Endothelial cell of umbilical vein (primary cell): ENCODE measurements at regions of chr16 and their contacts with region 1.

Region 1: DNA sequence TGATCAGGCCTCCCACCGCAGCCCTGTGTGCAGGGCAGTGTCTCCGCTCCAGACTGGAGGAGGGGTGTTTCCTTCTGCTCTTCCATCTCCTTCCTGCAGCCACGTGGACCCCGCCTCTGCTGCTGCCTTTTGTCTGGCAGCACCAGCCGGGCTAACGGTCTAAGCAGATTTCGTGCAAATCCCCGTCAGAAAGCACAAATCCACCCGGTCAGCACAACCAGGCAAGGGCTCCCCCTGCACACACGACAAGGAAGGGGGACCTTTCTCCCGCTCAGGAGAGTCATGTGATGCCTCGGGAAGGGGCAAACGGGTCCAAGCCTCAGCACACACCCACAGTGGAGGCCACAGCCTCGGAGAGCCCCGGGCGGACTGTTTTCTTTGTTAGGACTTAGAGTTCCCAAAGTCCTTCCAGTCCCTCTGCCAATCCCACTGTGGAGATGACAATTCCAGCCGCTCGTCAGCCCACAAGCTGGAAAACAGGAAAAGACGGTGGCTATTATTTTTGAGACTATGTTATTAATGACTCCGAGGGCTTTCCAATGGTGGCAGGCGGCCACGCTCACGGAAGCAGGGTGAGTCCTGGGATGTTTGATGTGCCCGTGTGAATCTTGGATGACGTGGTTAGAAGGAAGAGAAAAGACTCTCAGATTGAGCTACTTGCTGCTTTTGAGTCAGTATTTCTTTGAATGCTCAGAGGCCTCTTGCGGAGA is 22.5 kb upstream of the MEAK7 start:
- DNase-seq: peak; percentile 76
- H3K4me3 ChIP-seq: no peak overlapping the region
- H3K27ac ChIP-seq: peak overlapping the region; percentile 68
- H3K4me1 ChIP-seq: peaks cover 23% of the 10 kb centered on the region
- H3K27me3 ChIP-seq: no peaks in the 10 kb centered on the region
- CTCF ChIP-seq: no peak
- POLR2A ChIP-seq: peak; percentile 54

Region 2: DNA sequence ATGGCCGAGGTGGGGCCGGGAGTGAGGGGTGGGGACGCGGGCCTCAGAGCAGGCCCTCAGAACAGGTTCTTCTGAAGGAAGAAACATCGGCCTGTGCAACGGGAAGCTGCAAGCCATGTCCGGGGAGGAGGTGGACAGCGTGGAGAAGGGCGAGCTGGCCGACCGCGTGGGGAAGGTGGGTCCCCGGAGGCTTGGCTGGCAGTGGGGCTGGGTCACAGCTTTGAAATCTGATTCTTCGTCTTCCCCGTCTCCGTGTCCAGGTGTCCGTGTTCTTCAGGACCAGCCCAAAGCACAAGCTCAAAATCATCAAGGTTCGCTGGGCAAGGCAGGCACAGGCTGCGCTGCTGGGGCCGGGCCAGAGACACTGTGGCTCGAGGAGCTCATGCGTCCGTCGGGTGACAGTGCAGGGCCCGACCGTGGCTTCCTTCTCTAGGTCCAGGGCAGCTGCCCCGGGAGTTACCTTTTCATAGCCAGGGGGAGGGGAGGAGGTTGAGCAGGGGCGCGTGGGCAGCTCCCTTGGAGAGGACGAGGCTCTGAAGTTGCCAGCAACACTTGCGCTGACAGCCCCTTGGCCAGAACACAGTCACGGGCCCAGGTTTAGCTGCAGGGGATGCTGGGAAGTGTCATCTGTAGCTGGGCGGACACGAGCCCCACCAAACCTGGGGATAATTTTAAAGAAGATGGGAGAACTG is 73.7 kb before region 1 on chr16:
- CTCF ChIA-PET with region 1: no interaction called
- POLR2A ChIA-PET with region 1: no interaction called
- dilution Hi-C with region 1: no loop called
- intact Hi-C with region 1: no loop called
- DNase-seq: no peak
- H3K4me3 ChIP-seq: no peak overlapping the region
- H3K27ac ChIP-seq: no peak overlapping the region
- H3K4me1 ChIP-seq: no peaks in the 10 kb centered on the region
- H3K27me3 ChIP-seq: no peaks in the 10 kb centered on the region
- CTCF ChIP-seq: no peak
- POLR2A ChIP-seq: no peak

Region 3: GRCh38 chr16:84504420-84505248 is 22.3 kb before region 1 on chr16 and contains the start of gene MEAK7:
- CTCF ChIA-PET with region 1: interaction called, 73 read pairs
- POLR2A ChIA-PET with region 1: no interaction called
- dilution Hi-C with region 1: no loop called
- intact Hi-C with region 1: no loop called
- DNase-seq: peak; percentile 98
- H3K4me3 ChIP-seq: peak within 1 kb of the TSS; percentile 61 to 81 (median 62)
- H3K27ac ChIP-seq: peak within 1 kb of the TSS; percentile 38
- H3K4me1 ChIP-seq: peaks cover 10% of the 10 kb centered on the region
- H3K27me3 ChIP-seq: no peaks in the 10 kb centered on the region
- CTCF ChIP-seq: no peak
- POLR2A ChIP-seq: no peak
- total RNA-seq, gene MEAK7: 19.3 and 22.7 TPM in 2 replicates

Region 4: DNA sequence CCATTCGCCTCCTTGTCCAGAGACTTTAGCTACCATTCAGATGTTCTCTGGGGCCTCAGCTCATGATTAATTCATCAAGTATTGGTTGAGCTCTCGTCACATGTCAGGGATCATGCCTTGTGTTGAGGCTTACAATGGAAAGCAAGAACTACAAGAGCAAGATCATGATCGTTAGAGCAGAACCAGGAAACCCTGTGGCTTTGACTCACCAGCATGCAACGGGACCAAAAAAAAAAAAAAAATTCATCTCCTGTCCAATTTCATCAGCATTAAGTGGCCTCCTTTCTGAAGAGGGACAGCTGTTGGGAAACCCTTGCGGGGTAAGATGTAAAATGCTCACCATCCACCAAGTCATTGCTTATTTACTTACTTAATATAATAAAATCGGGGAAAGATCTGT is 160.8 kb after region 1 on chr16:
- CTCF ChIA-PET with region 1: no interaction called
- POLR2A ChIA-PET with region 1: no interaction called
- dilution Hi-C with region 1: no loop called
- intact Hi-C with region 1: no loop called
- DNase-seq: peak; percentile 37
- H3K4me3 ChIP-seq: no peak overlapping the region
- H3K27ac ChIP-seq: peak overlapping the region; percentile 46
- H3K4me1 ChIP-seq: peaks cover 13% of the 10 kb centered on the region
- H3K27me3 ChIP-seq: no peaks in the 10 kb centered on the region
- CTCF ChIP-seq: no peak
- POLR2A ChIP-seq: no peak